Activated B cell treated with CpG ODN at 0.5 μM for 24 hours (primary cell): ENCODE measurements at regions of chr11 and their contacts with region 1.

Region 1: DNA sequence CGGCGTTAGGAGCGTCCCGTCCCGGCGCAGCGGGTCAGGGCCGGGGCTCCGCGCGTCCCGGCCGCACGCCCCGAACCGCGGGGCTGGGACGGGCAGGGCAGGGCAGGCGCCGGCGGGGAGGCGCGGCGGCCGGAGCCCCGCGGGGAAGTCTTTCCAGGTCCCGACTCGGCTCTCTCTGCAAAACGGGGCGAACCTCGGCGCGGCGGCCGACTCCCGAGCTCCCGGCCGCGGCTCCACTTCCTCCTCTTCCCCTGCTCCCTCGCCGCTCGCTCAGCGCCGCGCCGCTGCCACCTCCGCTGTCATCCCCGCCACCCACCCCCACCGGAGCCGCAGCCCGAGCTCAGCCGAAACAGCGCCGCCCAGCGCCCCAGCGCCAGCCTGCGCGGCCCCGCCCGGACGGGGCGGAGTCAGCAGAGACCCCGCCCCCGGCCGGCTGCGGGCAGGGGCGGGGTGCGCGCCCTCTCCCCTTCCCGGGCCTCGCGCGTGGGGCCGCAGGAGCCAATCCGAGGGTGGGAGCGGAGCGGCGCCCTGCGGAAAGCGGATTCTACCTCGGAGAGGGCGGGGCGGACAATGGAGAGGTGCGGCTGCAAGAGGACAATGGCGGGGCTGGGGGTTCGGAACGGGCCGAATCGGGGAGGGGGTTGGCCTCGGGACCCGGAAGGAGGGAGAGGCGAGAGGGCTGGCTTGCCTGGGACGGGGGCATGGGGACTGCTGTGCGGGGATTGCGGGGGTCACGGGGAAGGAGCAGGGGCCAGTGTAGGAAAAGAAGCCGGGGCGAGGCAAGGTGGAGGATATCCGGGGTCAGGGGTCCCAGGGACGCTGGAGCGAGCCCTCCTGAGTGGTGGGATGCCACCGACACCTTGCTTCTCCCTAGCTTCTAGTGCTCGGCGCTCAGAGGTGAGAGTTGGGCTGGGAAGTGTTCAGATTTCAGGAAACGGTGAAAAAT is at the start of gene GDPD5:
- DNase-seq: peak; percentile 88
- ATAC-seq: peak; percentile 93
- H3K4me3 Mint-ChIP-seq: peak within 1 kb of the TSS; percentile 85
- H3K27ac Mint-ChIP-seq: no peak within 1 kb of the TSS
- H3K4me1 Mint-ChIP-seq: peaks cover 32% of the 10 kb centered on the region
- H3K27me3 Mint-ChIP-seq: peaks cover 3% of the 10 kb centered on the region
- CTCF ChIP-seq: no peak
- total RNA-seq, gene GDPD5: 22.2 and 23.9 TPM in 2 replicates

Region 2: GRCh38 chr11:75399344-75400145 is 126.3 kb before region 1 on chr11 and contains the start of gene RPS3:
- CTCF ChIA-PET with region 1: no interaction called
- POLR2A ChIA-PET with region 1: interaction called, 3 read pairs
- intact Hi-C with region 1: loop called (anchors 2 kb)
- DNase-seq: peak; percentile 83
- ATAC-seq: peak; percentile 91
- H3K4me3 Mint-ChIP-seq: peak within 1 kb of the TSS; percentile 99
- H3K27ac Mint-ChIP-seq: peak within 1 kb of the TSS; percentile 98
- H3K4me1 Mint-ChIP-seq: peaks cover 49% of the 10 kb centered on the region
- H3K27me3 Mint-ChIP-seq: peaks cover 5% of the 10 kb centered on the region
- CTCF ChIP-seq: no peak
- total RNA-seq, gene RPS3: 4,635 and 5,236 TPM in 2 replicates

Region 3: GRCh38 chr11:75474878-75475766 is 50.7 kb before region 1 on chr11:
- CTCF ChIA-PET with region 1: no interaction called
- POLR2A ChIA-PET with region 1: no interaction called
- intact Hi-C with region 1: loop called (anchors 5 kb)
- DNase-seq: no peak
- ATAC-seq: peak; percentile 28
- H3K4me3 Mint-ChIP-seq: no peak overlapping the region
- H3K27ac Mint-ChIP-seq: no peak overlapping the region
- H3K4me1 Mint-ChIP-seq: peaks cover 11% of the 10 kb centered on the region
- H3K27me3 Mint-ChIP-seq: no peaks in the 10 kb centered on the region
- CTCF ChIP-seq: no peak

Region 4: GRCh38 chr11:75492181-75492820 is 33.6 kb before region 1 on chr11:
- CTCF ChIA-PET with region 1: no interaction called
- POLR2A ChIA-PET with region 1: interaction called, 4 read pairs
- intact Hi-C with region 1: loop called (anchors 5 kb)
- DNase-seq: peak; percentile 27
- ATAC-seq: peak; percentile 94
- H3K4me3 Mint-ChIP-seq: peak overlapping the region; percentile 53
- H3K27ac Mint-ChIP-seq: no peak overlapping the region
- H3K4me1 Mint-ChIP-seq: peaks cover 13% of the 10 kb centered on the region
- H3K27me3 Mint-ChIP-seq: no peaks in the 10 kb centered on the region
- CTCF ChIP-seq: no peak

Region 5: DNA sequence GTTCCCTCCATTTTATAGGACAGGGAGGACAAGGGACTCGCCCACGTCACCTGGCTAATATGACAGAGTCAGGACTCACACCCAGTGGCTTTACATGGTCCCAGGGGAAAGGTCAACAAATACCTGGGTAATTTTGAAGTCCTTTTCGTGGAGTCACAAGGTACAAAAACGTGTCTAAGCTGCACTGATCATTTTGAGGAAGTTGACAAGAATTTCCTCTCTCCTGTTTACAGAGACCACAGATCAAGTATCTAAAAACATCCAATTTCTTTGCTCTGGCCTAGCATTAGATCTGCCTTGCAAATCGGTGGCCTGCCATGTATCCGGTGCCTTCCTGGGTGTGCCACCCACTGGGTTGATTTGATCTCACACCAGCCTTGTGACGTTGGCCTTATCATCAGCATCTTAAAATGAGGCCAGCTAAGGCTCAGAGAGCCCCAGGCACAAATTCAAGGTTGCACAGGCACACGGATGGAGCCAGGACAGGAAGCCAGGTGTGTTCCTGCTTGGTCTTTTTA is 17.8 kb before region 1 on chr11:
- CTCF ChIA-PET with region 1: interaction called, 4 read pairs
- POLR2A ChIA-PET with region 1: interaction called, 11 read pairs
- intact Hi-C with region 1: loop called (anchors 2 kb)
- DNase-seq: no peak
- ATAC-seq: peak; percentile 85
- H3K4me3 Mint-ChIP-seq: peak overlapping the region; percentile 40
- H3K27ac Mint-ChIP-seq: peak overlapping the region; percentile 91
- H3K4me1 Mint-ChIP-seq: peaks cover 59% of the 10 kb centered on the region
- H3K27me3 Mint-ChIP-seq: no peaks in the 10 kb centered on the region
- CTCF ChIP-seq: no peak

Region 6: DNA sequence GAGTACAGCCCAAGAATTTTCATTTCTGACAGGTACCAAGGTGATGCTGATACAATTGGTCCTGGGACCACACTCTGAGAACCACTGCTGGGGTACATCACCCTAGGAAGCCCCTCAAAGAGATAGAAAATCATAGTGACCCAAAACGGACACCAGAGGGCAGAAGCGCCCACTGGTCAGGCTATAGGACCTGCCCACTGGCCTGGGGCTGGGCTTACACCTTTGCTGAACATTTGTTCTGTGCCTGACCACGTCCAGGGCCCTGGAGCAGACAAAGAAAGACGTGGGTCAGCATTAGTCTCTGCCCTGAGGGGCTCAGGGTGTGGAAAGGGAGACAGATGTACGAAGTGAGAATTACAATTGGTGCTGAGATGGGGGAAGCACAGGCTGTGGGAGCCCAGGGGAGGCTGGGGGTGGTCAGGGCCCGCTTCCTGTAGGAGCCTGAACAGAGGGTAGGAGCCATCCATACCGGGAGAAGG is 21.8 kb after region 1 on chr11:
- CTCF ChIA-PET with region 1: no interaction called
- POLR2A ChIA-PET with region 1: no interaction called
- intact Hi-C with region 1: no loop called
- DNase-seq: no peak
- ATAC-seq: peak; percentile 61
- H3K4me3 Mint-ChIP-seq: no peak overlapping the region
- H3K27ac Mint-ChIP-seq: no peak overlapping the region
- H3K4me1 Mint-ChIP-seq: no peaks in the 10 kb centered on the region
- H3K27me3 Mint-ChIP-seq: peaks cover 17% of the 10 kb centered on the region
- CTCF ChIP-seq: no peak